Left ventricle myocardium inferior (tissue), 1 donor: ENCODE measurements at regions of chr17 and their contacts with region 1.

Region 1: GRCh38 chr17:18038861-18039534 is at the starts of genes ATPAF2 and GID4:
- DNase-seq: peak; percentile 100
- H3K4me3 ChIP-seq: peak within 1 kb of the TSS; percentile 88
- H3K27ac ChIP-seq: peak within 1 kb of the TSS; percentile 89
- H3K4me1 ChIP-seq: peaks cover 72% of the 10 kb centered on the region
- H3K27me3 ChIP-seq: no peaks in the 10 kb centered on the region
- CTCF ChIP-seq: no peak
- total RNA-seq, gene ATPAF2: 37.5 TPM
- total RNA-seq, gene GID4: 18.0 TPM

Region 2: DNA sequence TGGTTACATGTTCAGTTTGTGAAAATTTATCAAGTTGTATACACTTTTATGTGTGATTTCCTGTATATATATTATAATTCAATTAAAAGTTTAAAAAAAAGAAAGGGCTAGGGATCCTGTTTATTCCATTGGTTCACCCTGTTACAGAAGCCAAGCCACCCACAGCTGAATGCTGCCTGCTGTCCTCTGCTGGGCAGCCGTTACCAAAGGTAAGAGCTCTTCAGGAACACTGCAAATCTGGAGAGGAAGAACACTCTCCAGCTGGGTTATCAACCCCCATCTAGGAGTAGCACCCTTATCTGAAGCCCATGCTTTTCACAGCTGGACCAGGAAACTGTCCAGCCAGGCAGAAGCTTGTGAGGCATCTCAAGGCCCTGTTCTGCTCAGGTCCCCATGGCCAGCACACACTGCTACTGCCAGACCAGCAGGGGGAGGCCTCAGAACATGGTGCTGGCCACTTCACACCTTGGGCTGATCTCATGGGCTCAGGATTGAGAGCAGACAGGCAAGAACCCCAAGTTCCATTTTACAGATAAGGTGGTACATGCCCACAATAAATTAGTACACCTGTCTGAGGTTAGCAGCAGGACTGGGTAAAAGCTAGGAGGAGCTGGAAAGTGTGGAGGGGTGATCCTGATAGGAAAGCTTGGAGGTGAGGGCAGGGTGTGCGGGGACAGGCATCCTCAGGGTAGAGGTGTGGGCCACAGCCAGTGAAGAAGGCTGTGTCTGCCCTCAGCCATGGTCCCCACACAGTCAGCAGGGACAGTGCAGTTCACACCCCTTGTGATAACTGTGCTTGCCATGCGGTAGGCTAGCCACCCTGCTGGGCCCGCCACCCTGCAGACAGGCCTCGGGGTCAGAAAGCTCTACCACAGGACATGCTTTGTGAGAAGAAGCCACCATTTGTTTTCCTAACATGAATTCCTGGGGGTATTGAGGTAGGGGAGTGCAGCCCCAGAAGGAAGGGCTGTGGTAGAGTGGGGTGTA is 147.9 kb before region 1 on chr17:
- intact Hi-C with region 1: loop called (anchors 10 kb)
- DNase-seq: peak; percentile 36
- H3K4me3 ChIP-seq: no peak overlapping the region
- H3K27ac ChIP-seq: no peak overlapping the region
- H3K4me1 ChIP-seq: peaks cover 42% of the 10 kb centered on the region
- H3K27me3 ChIP-seq: no peaks in the 10 kb centered on the region
- CTCF ChIP-seq: peak; percentile 78